Gastrocnemius medialis (tissue), 4 donors: ENCODE measurements at regions of chrX and their contacts with region 1.

Region 1: DNA sequence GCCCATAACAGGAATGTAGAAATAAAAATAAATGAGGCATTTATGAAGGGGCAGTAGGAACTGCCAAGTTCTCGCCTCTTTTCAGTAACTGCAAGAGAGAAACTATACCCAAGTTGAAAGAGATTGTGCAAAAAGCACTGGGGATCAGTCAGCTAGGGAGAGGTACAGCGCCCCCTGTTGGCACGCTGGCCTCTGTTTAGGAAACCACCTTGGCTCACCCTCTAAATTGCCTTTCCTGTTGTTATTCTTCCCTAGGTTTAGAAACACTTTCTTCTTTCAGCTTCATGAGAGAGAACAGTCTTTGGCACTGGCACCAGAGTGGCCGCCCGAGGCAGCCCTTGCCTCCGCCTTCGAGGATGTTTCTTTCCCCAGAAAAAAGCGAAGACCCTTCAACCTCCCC is 348.5 kb downstream of the MID1IP1 start:
- DNase-seq: peak; percentile 27 to 63
- ATAC-seq: peak; percentile 65 to 88
- H3K4me3 ChIP-seq: no peak overlapping the region
- H3K27ac ChIP-seq: no peak overlapping the region
- H3K4me1 ChIP-seq: peaks cover 4 to 11% of the 10 kb centered on the region in 2 donors
- H3K27me3 ChIP-seq: no peaks in the 10 kb centered on the region
- CTCF ChIP-seq: peak; percentile 34 to 70 (median 67)
- POLR2A ChIP-seq: no peak

Region 2: DNA sequence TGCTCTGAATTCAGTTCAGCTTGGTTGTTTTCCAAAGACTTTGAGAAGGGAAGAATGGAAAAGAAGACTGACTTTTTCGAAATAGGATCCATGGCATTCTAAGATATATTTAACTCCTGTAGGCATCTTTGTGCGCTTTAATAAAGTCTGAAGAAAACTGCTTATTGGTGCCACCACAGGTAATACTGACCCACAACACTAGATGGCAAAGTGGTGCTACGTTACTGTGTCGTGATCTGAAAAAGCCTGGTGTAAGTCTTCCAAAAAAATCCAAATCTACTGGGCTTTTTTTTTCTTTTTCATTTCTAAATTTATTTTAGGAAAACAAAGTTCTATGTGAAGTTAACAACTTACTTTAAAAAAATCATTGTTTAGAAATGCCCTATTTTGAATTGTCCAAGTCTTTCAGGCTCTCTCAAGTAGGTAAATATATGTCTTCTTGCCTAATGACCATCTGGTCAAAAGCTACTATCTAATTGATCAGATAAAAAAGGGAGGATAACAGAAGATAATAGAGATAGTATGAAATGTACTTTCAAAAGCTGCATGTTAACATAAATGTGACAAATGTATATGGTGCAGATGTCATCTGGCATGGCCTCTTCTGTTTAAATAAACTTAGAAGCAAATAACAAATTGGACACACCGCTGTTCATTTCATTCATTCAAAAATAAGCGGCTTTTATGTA is 395.5 kb before region 1 on chrX:
- in situ Hi-C with region 1: loop called in 2 of 4 experiments (anchors 10 to 25 kb)
- intact Hi-C with region 1: loop called (anchors 5 kb)
- DNase-seq: peak in 1 of 2 donors; percentile 12
- ATAC-seq: peak in 1 of 2 donors; percentile 64
- H3K4me3 ChIP-seq: no peak overlapping the region
- H3K27ac ChIP-seq: no peak overlapping the region
- H3K4me1 ChIP-seq: no peaks in the 10 kb centered on the region
- H3K27me3 ChIP-seq: no peaks in the 10 kb centered on the region
- CTCF ChIP-seq: peak; percentile 40 to 66 (median 53)
- POLR2A ChIP-seq: no peak

Region 3: DNA sequence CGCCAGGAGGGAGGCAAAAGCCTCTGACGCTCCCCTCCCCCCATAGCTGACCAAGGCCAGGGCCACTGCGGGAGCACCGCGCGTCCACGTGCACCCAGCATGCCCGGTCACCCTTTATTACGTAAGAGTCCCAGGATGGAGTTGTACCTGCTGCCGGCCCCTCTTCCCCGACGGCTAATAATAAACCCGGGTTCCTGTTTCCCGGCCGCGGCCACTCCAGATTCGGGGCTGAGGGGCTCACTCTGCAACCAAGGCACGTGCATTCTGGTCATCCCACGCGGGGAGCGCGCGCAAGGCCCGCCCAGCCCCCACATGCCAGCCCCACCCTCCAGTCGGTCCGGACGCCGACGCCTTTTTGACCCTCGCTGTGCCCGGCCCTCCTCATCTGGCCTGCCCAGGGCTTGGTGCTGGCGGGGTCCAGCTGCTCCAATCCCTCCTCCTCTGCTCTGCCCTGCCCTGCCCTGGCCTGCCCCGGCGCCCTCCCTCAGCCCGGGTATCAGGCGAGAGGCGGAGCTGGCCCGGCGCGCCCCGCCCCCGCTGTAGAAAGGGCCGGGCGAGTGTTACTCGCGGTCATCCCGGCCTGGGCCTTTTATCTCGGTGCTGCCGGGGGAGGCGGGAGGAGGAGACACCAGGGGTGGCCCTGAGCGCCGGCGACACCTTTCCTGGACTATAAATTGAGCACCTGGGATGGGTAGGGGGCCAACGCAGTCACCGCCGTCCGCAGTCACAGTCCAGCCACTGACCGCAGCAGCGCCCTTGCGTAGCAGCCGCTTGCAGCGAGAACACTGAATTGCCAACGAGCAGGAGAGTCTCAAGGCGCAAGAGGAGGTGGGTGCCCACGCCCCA is 346.0 kb before region 1 on chrX:
- in situ Hi-C with region 1: no loop called
- intact Hi-C with region 1: loop called (anchors 2 kb)
- DNase-seq: peak; percentile 83 to 91
- ATAC-seq: peak; percentile 44 to 51
- H3K4me3 ChIP-seq: peak overlapping the region; percentile 51 to 76 (median 74)
- H3K27ac ChIP-seq: peak overlapping the region; percentile 91 to 96 (median 94)
- H3K4me1 ChIP-seq: peaks cover 4 to 16% of the 10 kb centered on the region in 2 donors
- H3K27me3 ChIP-seq: no peaks in the 10 kb centered on the region
- CTCF ChIP-seq: peak in 1 of 5 experiments; percentile 8
- POLR2A ChIP-seq: peak; percentile 84 to 92

Region 4: GRCh38 chrX:38999967-39000745 is 149.6 kb before region 1 on chrX:
- in situ Hi-C with region 1: loop called in 1 of 4 experiments (anchors 10 kb)
- intact Hi-C with region 1: loop called (anchors 5 kb)
- DNase-seq: peak; percentile 25 to 35
- ATAC-seq: peak; percentile 88 to 93
- H3K4me3 ChIP-seq: no peak overlapping the region
- H3K27ac ChIP-seq: peak overlapping the region; percentile 77 to 85 (median 80)
- H3K4me1 ChIP-seq: peaks cover 0 to 15% of the 10 kb centered on the region in 2 donors
- H3K27me3 ChIP-seq: no peaks in the 10 kb centered on the region
- CTCF ChIP-seq: no peak
- POLR2A ChIP-seq: no peak

Region 5: GRCh38 chrX:39242187-39242586 is 92.4 kb after region 1 on chrX:
- in situ Hi-C with region 1: no loop called
- intact Hi-C with region 1: loop called (anchors 5 kb)
- DNase-seq: peak; percentile 17 to 18
- ATAC-seq: peak; percentile 81 to 91
- H3K4me3 ChIP-seq: no peak overlapping the region
- H3K27ac ChIP-seq: no peak overlapping the region
- H3K4me1 ChIP-seq: no peaks in the 10 kb centered on the region
- H3K27me3 ChIP-seq: no peaks in the 10 kb centered on the region
- CTCF ChIP-seq: peak; percentile 21 to 57 (median 46)
- POLR2A ChIP-seq: no peak

Region 6: DNA sequence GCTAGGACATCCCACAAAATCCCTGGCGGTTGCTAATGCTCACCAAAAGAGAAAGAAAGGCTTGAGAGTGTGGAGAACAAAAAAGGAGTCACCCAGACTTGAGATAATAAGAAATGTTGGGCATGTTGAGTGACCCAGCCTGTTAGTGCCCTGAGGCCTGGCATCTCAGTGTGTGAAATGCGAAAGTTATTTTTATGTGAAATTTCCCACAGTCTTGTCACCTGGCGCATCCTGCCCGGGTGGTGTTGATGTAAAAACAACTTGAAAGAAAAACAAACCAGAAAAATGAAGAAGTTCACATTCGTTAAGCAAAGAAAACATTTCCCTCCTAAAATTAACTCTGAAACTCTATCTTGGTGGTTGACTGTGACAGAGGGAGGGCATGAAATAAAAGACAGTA is 146.7 kb after region 1 on chrX:
- in situ Hi-C with region 1: no loop called
- intact Hi-C with region 1: no loop called
- DNase-seq: no peak
- ATAC-seq: no peak
- H3K4me3 ChIP-seq: no peak overlapping the region
- H3K27ac ChIP-seq: no peak overlapping the region
- H3K4me1 ChIP-seq: no peaks in the 10 kb centered on the region
- H3K27me3 ChIP-seq: peaks cover 0 to 5% (median 0%) of the 10 kb centered on the region in 3 donors
- CTCF ChIP-seq: no peak
- POLR2A ChIP-seq: no peak